Naive thymus-derived CD4-positive, alpha-beta T cell (primary cell): ENCODE measurements at regions of chr2 and their contacts with region 1.

Region 1: GRCh38 chr2:24827321-24828237 is 34.4 kb downstream of the CENPO start:
- DNase-seq: peak; percentile 41 to 76 (median 65)
- ATAC-seq: peak; percentile 91
- H3K4me3 ChIP-seq: no peak overlapping the region
- H3K4me3 Mint-ChIP-seq: no peak overlapping the region
- H3K27ac ChIP-seq: no peak overlapping the region
- H3K27ac Mint-ChIP-seq: peak overlapping the region in 3 of 9 donors; percentile 7 to 74 (median 42)
- H3K4me1 ChIP-seq: peaks cover 0 to 4% of the 10 kb centered on the region in 2 donors
- H3K4me1 Mint-ChIP-seq: peaks cover 4 to 23% (median 7%) of the 10 kb centered on the region in 7 donors
- H3K27me3 ChIP-seq: no peaks in the 10 kb centered on the region
- H3K27me3 Mint-ChIP-seq: no peaks in the 10 kb centered on the region

Region 2: DNA sequence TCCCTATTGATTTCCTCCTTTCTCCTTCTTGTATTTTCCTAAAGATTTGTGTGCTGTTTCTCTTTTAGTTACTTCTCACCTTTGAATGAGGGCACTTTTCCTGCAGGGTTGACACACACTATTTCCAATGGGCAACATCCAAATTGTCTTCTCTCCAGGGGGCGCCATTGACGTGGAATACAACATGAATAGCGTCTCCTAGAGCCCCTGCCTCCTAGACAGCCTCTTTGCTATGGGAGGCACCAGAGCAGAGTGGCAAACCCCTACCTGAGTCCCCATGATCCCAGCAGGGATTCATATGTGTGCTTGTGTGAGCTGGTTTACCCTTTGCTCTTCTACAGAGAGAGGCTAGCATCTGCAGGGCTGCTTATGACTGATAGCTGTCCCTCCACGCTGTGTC is 405.9 kb before region 1 on chr2:
- CTCF ChIA-PET with region 1: interaction called, 17 read pairs
- POLR2A ChIA-PET with region 1: no interaction called
- intact Hi-C with region 1: loop called (anchors 1 kb)
- DNase-seq: peak in 7 of 9 donors; percentile 15 to 46 (median 43)
- ATAC-seq: peak; percentile 55
- H3K4me3 ChIP-seq: no peak overlapping the region
- H3K4me3 Mint-ChIP-seq: no peak overlapping the region
- H3K27ac ChIP-seq: no peak overlapping the region
- H3K27ac Mint-ChIP-seq: no peak overlapping the region
- H3K4me1 ChIP-seq: no peaks in the 10 kb centered on the region
- H3K4me1 Mint-ChIP-seq: peaks cover 0 to 4% (median 0%) of the 10 kb centered on the region in 7 donors
- H3K27me3 ChIP-seq: no peaks in the 10 kb centered on the region
- H3K27me3 Mint-ChIP-seq: peaks cover 0 to 3% (median 0%) of the 10 kb centered on the region in 5 donors

Region 3: DNA sequence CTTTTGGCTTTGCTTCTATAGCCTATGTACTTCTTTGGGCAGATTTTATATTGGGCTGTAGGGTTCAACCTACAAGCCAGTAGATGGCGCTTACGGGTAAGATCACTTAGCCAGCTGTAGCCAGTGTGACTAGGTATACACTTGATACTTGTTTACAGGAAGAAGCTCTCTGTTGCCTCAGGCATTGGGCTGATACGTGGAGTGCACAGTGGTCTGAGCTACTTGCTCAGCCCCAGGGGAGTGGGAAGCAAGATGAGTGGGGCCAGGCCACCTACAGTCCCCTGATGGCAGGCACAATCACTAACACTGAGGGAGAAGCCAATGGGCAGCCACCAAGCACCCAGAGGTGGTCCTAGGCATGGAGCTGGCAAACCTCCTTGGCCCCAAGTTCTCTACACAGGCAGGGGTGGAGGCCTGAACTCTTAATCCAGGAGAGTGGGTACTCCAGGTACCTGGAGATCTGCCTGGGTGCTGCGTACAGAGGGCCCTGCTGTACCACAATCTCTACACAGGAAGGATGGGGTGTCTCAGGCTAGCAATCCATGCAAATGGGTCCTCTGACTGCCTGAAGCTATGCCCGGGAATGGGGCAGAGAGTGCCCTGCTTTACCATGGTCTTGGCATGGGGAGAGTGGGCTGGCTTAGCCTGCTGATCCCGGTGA is 214.3 kb before region 1 on chr2:
- CTCF ChIA-PET with region 1: no interaction called
- POLR2A ChIA-PET with region 1: no interaction called
- intact Hi-C with region 1: loop called in 1 of 2 experiments (anchors 1 kb)
- DNase-seq: peak in 1 of 9 donors; percentile 22
- ATAC-seq: peak; percentile 81
- H3K4me3 ChIP-seq: no peak overlapping the region
- H3K4me3 Mint-ChIP-seq: peak overlapping the region in 2 of 10 donors; percentile 1 to 18
- H3K27ac ChIP-seq: no peak overlapping the region
- H3K27ac Mint-ChIP-seq: peak overlapping the region in 2 of 9 donors; percentile 74 to 92
- H3K4me1 ChIP-seq: no peaks in the 10 kb centered on the region
- H3K4me1 Mint-ChIP-seq: peaks cover 10 to 37% (median 26%) of the 10 kb centered on the region in 7 donors
- H3K27me3 ChIP-seq: no peaks in the 10 kb centered on the region
- H3K27me3 Mint-ChIP-seq: no peaks in the 10 kb centered on the region

Region 4: GRCh38 chr2:25131567-25132298 is 304.2 kb after region 1 on chr2:
- CTCF ChIA-PET with region 1: interaction called, 4 read pairs
- POLR2A ChIA-PET with region 1: no interaction called
- intact Hi-C with region 1: loop called (anchors 1 to 5 kb)
- DNase-seq: peak in 1 of 9 donors; percentile 32
- ATAC-seq: peak; percentile 44
- H3K4me3 ChIP-seq: no peak overlapping the region
- H3K4me3 Mint-ChIP-seq: peak overlapping the region; percentile 20 to 82 (median 74)
- H3K27ac ChIP-seq: no peak overlapping the region
- H3K27ac Mint-ChIP-seq: peak overlapping the region in 1 of 9 donors; percentile 62
- H3K4me1 ChIP-seq: peaks cover 0 to 6% of the 10 kb centered on the region in 2 donors
- H3K4me1 Mint-ChIP-seq: peaks cover 6 to 16% (median 12%) of the 10 kb centered on the region in 7 donors
- H3K27me3 ChIP-seq: peaks cover 0 to 17% of the 10 kb centered on the region in 2 donors
- H3K27me3 Mint-ChIP-seq: peaks cover 52 to 65% (median 58%) of the 10 kb centered on the region in 5 donors